Naive thymus-derived CD4-positive, alpha-beta T cell (primary cell): ENCODE measurements at regions of chrX and their contacts with region 1.

Region 1: DNA sequence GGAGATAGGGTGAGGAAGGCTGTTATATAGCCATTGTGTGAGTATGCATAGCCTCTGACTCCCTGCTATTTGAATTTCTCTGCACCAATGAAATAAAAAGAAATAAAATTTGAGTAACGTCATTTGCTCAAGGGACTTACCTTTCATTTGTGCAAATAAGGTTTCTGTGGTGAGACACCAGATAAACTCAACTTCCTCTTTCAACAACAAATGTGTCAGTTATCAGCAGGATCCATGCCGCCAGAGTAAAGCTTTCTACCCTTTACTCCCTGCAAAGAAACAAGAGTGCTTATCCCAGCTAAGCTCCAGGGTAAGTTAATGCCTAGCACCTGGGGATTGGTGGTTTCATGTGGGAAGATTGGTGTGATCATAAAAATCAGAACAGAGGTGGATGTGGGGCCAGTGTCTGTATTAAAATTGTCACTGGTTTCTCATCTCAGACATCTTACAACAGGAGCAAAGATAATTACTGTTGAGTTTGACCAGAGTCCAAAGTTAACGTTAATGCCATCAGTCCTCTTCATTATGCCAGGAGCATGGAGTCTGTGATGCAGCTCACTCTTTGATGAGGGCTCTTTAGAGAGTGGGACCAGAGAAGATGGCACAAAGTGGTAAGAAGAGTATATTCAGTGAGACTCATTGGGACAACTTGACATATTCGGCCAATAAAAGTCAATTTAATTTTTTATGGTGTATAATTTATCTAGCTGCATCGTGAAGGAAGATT is at the start of gene P2RY10:
- DNase-seq: peak in 8 of 9 donors; percentile 21 to 82 (median 75)
- ATAC-seq: peak; percentile 92
- H3K4me3 ChIP-seq: peak within 1 kb of the TSS; percentile 81
- H3K4me3 Mint-ChIP-seq: peak within 1 kb of the TSS; percentile 86 to 99 (median 92)
- H3K27ac ChIP-seq: peak within 1 kb of the TSS; percentile 86
- H3K27ac Mint-ChIP-seq: peak within 1 kb of the TSS; percentile 94 to 99 (median 98)
- H3K4me1 ChIP-seq: peaks cover 6 to 19% of the 10 kb centered on the region in 2 donors
- H3K4me1 Mint-ChIP-seq: peaks cover 15 to 62% (median 51%) of the 10 kb centered on the region in 7 donors
- H3K27me3 ChIP-seq: no peaks in the 10 kb centered on the region
- H3K27me3 Mint-ChIP-seq: no peaks in the 10 kb centered on the region
- total RNA-seq, gene P2RY10: 47.6 to 98.5 (median 67.4) TPM

Region 2: DNA sequence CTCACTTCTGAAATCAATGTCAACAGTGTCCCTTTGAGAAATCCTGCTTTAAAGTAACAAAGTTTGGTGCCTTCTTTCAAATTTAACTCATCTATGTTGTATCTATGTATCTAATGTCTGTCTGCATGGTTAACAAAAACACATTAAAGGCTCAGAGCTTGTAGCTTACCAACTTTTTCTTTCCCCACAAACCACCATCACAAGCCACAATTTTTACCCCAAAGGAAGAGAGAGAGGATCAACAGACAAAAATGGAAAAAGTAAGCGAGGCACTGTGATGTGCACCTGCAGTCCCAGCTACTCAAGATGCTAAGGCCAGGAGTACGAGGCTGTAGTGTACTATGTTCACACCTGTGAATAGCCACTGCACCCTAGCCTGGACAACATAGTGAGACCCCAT is 1176.6 kb before region 1 on chrX:
- CTCF ChIA-PET with region 1: no interaction called
- POLR2A ChIA-PET with region 1: no interaction called
- intact Hi-C with region 1: no loop called
- DNase-seq: peak in 3 of 9 donors; percentile 12 to 28 (median 22)
- ATAC-seq: peak; percentile 41
- H3K4me3 ChIP-seq: no peak overlapping the region
- H3K4me3 Mint-ChIP-seq: peak overlapping the region in 9 of 10 donors; percentile 7 to 79 (median 57)
- H3K27ac ChIP-seq: no peak overlapping the region
- H3K27ac Mint-ChIP-seq: peak overlapping the region; percentile 0 to 86 (median 25)
- H3K4me1 ChIP-seq: peaks cover 0 to 5% of the 10 kb centered on the region in 2 donors
- H3K4me1 Mint-ChIP-seq: peaks cover 16 to 49% (median 37%) of the 10 kb centered on the region in 7 donors
- H3K27me3 ChIP-seq: no peaks in the 10 kb centered on the region
- H3K27me3 Mint-ChIP-seq: no peaks in the 10 kb centered on the region

Region 3: DNA sequence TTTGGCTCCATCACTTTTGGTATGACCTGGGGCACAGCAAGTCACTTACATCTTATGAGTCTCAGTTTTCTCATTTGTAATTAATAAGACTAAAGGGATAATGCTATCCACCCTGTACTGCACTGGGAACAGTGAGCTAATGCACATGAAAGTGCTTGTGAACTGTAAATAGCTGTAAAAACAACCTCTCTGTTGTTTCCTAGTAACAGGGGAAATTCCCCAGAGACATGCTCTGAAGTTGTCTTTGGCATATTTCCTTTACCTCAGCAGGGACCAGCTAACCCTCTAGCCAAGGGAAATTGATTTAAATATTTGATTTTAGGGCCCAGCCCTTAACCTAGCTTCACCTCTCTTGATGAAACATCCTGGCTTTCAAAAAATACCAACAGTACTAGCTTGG is 611.8 kb before region 1 on chrX:
- CTCF ChIA-PET with region 1: no interaction called
- POLR2A ChIA-PET with region 1: no interaction called
- intact Hi-C with region 1: loop called (anchors 5 kb)
- DNase-seq: peak in 7 of 9 donors; percentile 33 to 77 (median 55)
- ATAC-seq: peak; percentile 88
- H3K4me3 ChIP-seq: no peak overlapping the region
- H3K4me3 Mint-ChIP-seq: peak overlapping the region in 9 of 10 donors; percentile 3 to 70 (median 19)
- H3K27ac ChIP-seq: peak overlapping the region; percentile 75
- H3K27ac Mint-ChIP-seq: peak overlapping the region; percentile 60 to 99 (median 89)
- H3K4me1 ChIP-seq: peaks cover 9 to 38% of the 10 kb centered on the region in 2 donors
- H3K4me1 Mint-ChIP-seq: peaks cover 22 to 86% (median 67%) of the 10 kb centered on the region in 7 donors
- H3K27me3 ChIP-seq: no peaks in the 10 kb centered on the region
- H3K27me3 Mint-ChIP-seq: no peaks in the 10 kb centered on the region

Region 4: DNA sequence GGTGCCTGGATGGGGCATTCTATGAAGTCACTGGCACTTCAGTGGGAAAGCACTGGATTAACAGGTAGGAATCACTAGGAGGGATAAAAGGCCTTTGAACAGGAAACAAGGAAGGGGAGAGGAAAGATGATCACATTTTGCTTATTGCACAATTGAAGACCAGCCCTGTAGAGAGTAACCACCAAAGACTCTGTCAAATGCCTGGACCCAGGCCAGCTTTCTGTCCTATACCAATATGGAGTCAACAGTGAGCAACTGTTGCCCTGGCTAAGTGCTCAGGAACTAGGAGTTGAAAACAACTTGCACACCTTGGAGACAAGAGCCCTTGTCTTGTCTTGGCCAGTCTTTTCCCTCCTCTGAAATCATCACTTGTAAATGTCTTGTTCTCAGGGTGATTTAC is 272.1 kb before region 1 on chrX:
- CTCF ChIA-PET with region 1: no interaction called
- POLR2A ChIA-PET with region 1: no interaction called
- intact Hi-C with region 1: no loop called
- DNase-seq: no peak
- ATAC-seq: no peak
- H3K4me3 ChIP-seq: no peak overlapping the region
- H3K4me3 Mint-ChIP-seq: no peak overlapping the region
- H3K27ac ChIP-seq: no peak overlapping the region
- H3K27ac Mint-ChIP-seq: no peak overlapping the region
- H3K4me1 ChIP-seq: no peaks in the 10 kb centered on the region
- H3K4me1 Mint-ChIP-seq: peaks cover 0 to 2% (median 0%) of the 10 kb centered on the region in 7 donors
- H3K27me3 ChIP-seq: no peaks in the 10 kb centered on the region
- H3K27me3 Mint-ChIP-seq: no peaks in the 10 kb centered on the region

Region 5: GRCh38 chrX:78886550-78886949 is 58.8 kb before region 1 on chrX:
- CTCF ChIA-PET with region 1: interaction called, 5 read pairs
- POLR2A ChIA-PET with region 1: no interaction called
- intact Hi-C with region 1: loop called in 1 of 2 experiments (anchors 5 kb)
- DNase-seq: peak in 6 of 9 donors; percentile 2 to 33 (median 18)
- ATAC-seq: peak; percentile 67
- H3K4me3 ChIP-seq: no peak overlapping the region
- H3K4me3 Mint-ChIP-seq: peak overlapping the region in 3 of 10 donors; percentile 0 to 46 (median 38)
- H3K27ac ChIP-seq: no peak overlapping the region
- H3K27ac Mint-ChIP-seq: peak overlapping the region in 5 of 9 donors; percentile 6 to 51 (median 13)
- H3K4me1 ChIP-seq: peaks cover 0 to 4% of the 10 kb centered on the region in 2 donors
- H3K4me1 Mint-ChIP-seq: peaks cover 4 to 11% (median 9%) of the 10 kb centered on the region in 7 donors
- H3K27me3 ChIP-seq: no peaks in the 10 kb centered on the region
- H3K27me3 Mint-ChIP-seq: no peaks in the 10 kb centered on the region

Region 6: GRCh38 chrX:79146640-79147390 is 201.5 kb after region 1 on chrX:
- CTCF ChIA-PET with region 1: no interaction called
- POLR2A ChIA-PET with region 1: interaction called, 4 read pairs
- intact Hi-C with region 1: loop called in 1 of 2 experiments (anchors 2 kb)
- DNase-seq: no peak
- ATAC-seq: peak; percentile 64
- H3K4me3 ChIP-seq: peak overlapping the region; percentile 71
- H3K4me3 Mint-ChIP-seq: peak overlapping the region; percentile 66 to 96 (median 92)
- H3K27ac ChIP-seq: peak overlapping the region; percentile 85
- H3K27ac Mint-ChIP-seq: peak overlapping the region; percentile 82 to 98 (median 91)
- H3K4me1 ChIP-seq: peaks cover 10 to 16% of the 10 kb centered on the region in 2 donors
- H3K4me1 Mint-ChIP-seq: peaks cover 10 to 47% (median 28%) of the 10 kb centered on the region in 7 donors
- H3K27me3 ChIP-seq: no peaks in the 10 kb centered on the region
- H3K27me3 Mint-ChIP-seq: no peaks in the 10 kb centered on the region

Region 7: DNA sequence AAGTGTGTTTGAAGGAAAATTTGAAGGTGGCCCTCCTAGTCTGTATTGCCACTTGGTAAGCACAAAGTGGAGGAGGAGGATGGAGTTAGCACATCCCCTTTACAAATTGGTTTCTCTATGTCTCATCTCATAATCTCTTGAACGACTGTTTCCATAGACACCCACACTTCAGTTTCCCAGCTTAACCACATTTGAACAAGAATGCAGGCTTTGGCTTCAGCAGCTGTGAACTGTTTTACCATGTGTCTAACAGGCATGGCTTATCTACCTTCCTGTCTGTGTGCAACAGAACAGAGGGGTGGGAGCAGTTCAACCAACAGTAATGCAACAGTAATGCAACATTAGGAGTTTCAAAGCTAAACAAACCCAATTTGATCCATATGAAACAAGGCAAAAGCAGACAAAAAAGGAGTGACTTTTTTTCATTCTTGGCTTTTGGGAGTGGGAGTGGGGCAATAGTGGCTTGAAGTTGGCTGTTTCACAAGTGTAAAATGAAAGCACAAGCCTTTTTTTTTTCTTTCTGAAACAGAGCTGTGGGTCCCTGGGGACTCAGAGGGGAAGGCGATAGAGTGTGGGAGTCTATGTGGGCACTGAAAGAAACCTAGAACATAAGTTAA is 313.8 kb after region 1 on chrX:
- CTCF ChIA-PET with region 1: no interaction called
- POLR2A ChIA-PET with region 1: no interaction called
- intact Hi-C with region 1: loop called in 1 of 2 experiments (anchors 1 kb)
- DNase-seq: peak; percentile 4 to 84 (median 74)
- ATAC-seq: peak; percentile 95
- H3K4me3 ChIP-seq: peak overlapping the region; percentile 23
- H3K4me3 Mint-ChIP-seq: peak overlapping the region; percentile 10 to 86 (median 79)
- H3K27ac ChIP-seq: peak overlapping the region; percentile 78
- H3K27ac Mint-ChIP-seq: peak overlapping the region; percentile 83 to 98 (median 94)
- H3K4me1 ChIP-seq: peaks cover 52 to 65% of the 10 kb centered on the region in 2 donors
- H3K4me1 Mint-ChIP-seq: peaks cover 26 to 90% (median 82%) of the 10 kb centered on the region in 7 donors
- H3K27me3 ChIP-seq: no peaks in the 10 kb centered on the region
- H3K27me3 Mint-ChIP-seq: no peaks in the 10 kb centered on the region

Region 8: DNA sequence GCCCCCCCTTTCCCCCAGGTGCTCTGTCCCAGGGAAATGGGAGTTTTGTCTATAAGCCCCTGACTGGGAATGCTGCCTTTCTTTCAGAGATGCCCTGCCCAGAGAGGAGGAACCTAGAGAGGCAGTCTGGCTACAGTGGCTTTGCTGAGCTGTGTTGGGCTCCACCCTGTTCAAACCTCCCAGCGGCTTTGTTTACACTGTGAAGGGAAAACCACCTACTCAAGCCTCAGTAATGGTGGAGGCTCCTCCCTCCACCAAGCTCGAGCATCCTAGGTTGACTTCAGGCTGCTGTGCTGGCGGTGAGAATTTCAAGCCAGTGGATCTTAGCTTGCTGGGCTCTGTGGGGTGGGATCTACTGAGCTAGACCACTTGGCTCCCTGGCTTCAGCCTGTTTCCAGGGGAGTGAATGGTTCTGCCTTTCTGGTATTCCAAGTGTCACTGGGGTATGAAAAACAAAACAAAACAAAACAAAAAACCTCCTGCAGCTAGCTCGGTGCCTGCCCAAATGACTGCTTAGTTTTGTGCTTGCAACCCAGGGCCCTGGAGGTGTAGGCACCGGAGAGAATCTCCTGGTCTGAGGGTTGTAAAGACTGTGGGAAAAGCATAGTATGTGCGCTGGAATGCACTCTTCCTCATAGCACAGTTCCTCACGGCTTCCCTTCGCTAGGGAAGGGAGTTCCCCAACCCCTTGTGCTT is 380.1 kb after region 1 on chrX:
- CTCF ChIA-PET with region 1: no interaction called
- POLR2A ChIA-PET with region 1: no interaction called
- intact Hi-C with region 1: loop called in 1 of 2 experiments (anchors 5 kb)
- DNase-seq: peak in 8 of 9 donors; percentile 25 to 69 (median 50)
- ATAC-seq: peak; percentile 86
- H3K4me3 ChIP-seq: no peak overlapping the region
- H3K4me3 Mint-ChIP-seq: peak overlapping the region; percentile 52 to 86 (median 82)
- H3K27ac ChIP-seq: peak overlapping the region; percentile 57
- H3K27ac Mint-ChIP-seq: peak overlapping the region; percentile 78 to 97 (median 89)
- H3K4me1 ChIP-seq: no peaks in the 10 kb centered on the region
- H3K4me1 Mint-ChIP-seq: peaks cover 0 to 29% (median 14%) of the 10 kb centered on the region in 7 donors
- H3K27me3 ChIP-seq: no peaks in the 10 kb centered on the region
- H3K27me3 Mint-ChIP-seq: no peaks in the 10 kb centered on the region

Region 9: DNA sequence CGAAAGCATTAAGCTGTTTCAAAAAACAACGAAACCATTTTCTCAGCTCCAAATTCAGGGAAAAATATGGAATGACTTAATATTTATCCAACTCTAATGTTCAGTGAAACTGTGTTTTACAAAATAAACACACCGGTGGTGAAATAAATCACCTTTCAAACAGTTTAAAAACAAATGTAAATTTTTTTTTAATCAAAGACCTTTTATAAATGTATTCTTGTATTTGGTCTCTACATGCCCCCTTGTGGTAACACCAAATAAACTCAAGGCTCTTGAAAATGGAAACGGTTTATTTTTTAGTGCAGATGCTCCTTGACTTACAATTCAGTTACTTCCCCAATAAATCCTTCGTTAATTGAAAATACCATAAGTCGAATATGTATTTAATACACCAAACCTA is 467.6 kb after region 1 on chrX:
- CTCF ChIA-PET with region 1: no interaction called
- POLR2A ChIA-PET with region 1: no interaction called
- intact Hi-C with region 1: loop called in 1 of 2 experiments (anchors 2 kb)
- DNase-seq: peak in 7 of 9 donors; percentile 13 to 65 (median 39)
- ATAC-seq: no peak
- H3K4me3 ChIP-seq: peak overlapping the region; percentile 58
- H3K4me3 Mint-ChIP-seq: peak overlapping the region; percentile 58 to 85 (median 82)
- H3K27ac ChIP-seq: peak overlapping the region; percentile 68
- H3K27ac Mint-ChIP-seq: peak overlapping the region; percentile 46 to 92 (median 68)
- H3K4me1 ChIP-seq: peaks cover 0 to 3% of the 10 kb centered on the region in 2 donors
- H3K4me1 Mint-ChIP-seq: peaks cover 13 to 46% (median 27%) of the 10 kb centered on the region in 7 donors
- H3K27me3 ChIP-seq: no peaks in the 10 kb centered on the region
- H3K27me3 Mint-ChIP-seq: no peaks in the 10 kb centered on the region